Right ventricle myocardium superior (tissue), 1 donor: ENCODE measurements at regions of chr3 and their contacts with region 1.

Region 1: GRCh38 chr3:4978204-4978965 is 852 bp upstream of the BHLHE40 start:
- DNase-seq: peak; percentile 97
- ATAC-seq: peak; percentile 76

Region 2: GRCh38 chr3:4601892-4602291 is 376.5 kb before region 1 on chr3:
- intact Hi-C with region 1: no loop called
- DNase-seq: no peak
- ATAC-seq: no peak

Region 3: GRCh38 chr3:4722103-4722502 is 256.3 kb before region 1 on chr3:
- intact Hi-C with region 1: loop called (anchors 5 kb)
- DNase-seq: peak; percentile 63
- ATAC-seq: peak; percentile 81

Region 4: GRCh38 chr3:5016218-5017161 is 38.1 kb after region 1 on chr3:
- intact Hi-C with region 1: loop called (anchors 5 kb)
- DNase-seq: peak; percentile 50
- ATAC-seq: peak; percentile 70

Region 5: GRCh38 chr3:5330152-5330810 is 351.9 kb after region 1 on chr3:
- intact Hi-C with region 1: no loop called
- DNase-seq: no peak
- ATAC-seq: no peak

Region 6: DNA sequence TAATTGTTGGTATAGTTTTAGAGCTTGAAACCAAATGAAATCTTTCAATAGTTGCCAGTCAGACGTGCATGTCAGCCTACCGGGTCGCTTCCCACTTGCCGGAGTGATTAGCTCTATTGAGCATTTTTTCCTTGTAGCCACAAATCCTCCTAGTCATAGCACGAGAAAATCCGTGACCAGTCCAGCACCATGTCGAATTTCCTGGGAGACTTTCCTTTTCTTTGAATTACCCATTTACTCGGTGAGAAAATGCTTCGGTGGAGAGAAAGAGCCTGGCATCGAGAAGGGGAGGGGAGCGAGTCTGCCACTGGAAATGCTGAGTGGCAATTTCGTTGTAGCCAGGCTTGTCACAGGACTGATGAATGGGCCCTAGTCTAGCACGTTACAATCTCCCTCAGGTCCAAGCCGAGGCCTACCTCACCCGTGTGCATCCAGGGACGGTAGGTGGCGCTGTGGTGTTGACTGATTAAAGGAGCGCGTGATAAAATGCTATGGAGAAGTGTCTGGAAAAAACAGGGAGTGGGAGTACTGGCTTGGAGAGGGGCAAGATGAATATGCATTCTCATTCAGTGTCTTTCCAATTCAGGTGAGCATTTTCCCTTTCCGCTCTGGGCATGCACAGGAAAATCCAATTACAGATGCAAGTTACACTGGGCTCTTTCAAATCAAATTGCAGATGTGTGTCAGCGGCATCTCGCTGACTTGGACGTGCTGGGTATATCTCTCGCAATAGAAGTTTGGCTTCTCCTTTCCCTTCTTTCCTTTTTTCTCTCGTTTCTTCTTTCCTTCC is 447.9 kb after region 1 on chr3:
- intact Hi-C with region 1: no loop called
- DNase-seq: peak; percentile 85
- ATAC-seq: peak; percentile 80